ENCODE measurements at regions of chr11 and their contacts with region 1.

Region 1: DNA sequence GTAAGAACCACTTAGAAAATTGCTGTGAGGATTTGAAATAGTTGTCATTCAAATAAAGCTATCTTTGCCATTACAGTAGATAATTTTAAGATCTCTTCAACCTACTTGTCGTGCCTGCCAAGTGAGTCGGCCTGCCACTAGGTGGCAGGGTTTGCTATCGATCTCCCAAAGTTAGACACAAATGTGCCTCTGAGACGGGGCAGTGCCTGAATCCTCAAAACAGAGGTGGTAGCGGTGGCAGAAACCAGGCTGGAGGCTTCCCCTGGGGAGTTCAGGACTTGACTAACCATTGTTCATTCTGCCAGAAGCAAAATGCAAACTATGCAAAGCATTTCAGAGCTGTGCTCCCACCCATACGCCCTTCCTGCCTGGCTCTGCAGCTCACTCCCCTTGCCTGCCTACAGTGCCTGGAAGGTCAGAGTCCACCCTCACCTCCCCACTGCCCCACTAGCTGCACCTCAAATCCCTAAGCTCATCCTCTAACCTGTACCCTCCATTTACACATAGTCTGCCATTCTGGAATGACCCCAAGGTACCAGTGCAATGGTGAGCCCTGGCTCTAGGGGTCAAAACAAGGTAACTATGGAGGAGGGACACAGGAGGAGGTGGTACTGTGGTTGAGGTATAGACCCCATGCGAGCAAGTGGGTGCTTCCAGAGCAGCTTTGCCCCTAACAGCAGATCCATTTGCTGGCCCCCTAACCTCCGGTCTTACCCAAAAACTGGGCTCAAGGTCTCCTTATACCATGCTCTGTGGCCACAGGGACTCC is 82.1 kb downstream of the C11orf58 start:
- DNase-seq: peak; percentile 69 to 82 (median 70)
- ATAC-seq: peak; percentile 92
- H3K4me3 ChIP-seq: no peak overlapping the region
- H3K27ac ChIP-seq: no peak overlapping the region
- H3K4me1 ChIP-seq: peaks cover 0 to 5% of the 10 kb centered on the region in 2 experiments; a peak in 1 of 5 replicates
- H3K27me3 ChIP-seq: peaks cover 26 to 34% of the 10 kb centered on the region in 2 experiments
- CTCF ChIP-seq: peak; percentile 80 to 91 (median 87)
- EP300 ChIP-seq: no peak
- POLR2A ChIP-seq: no peak
- RAD21 ChIP-seq: peak; percentile 70 to 88

Region 2: GRCh38 chr11:15865212-15865987 is 955.1 kb before region 1 on chr11:
- CTCF ChIA-PET with region 1: no interaction called
- POLR2A ChIA-PET with region 1: no interaction called
- in situ Hi-C with region 1: no loop called
- intact Hi-C with region 1: no loop called
- DNase-seq: no peak
- ATAC-seq: no peak
- H3K4me3 ChIP-seq: no peak overlapping the region
- H3K27ac ChIP-seq: no peak overlapping the region
- H3K4me1 ChIP-seq: no peaks in the 10 kb centered on the region
- H3K27me3 ChIP-seq: peaks cover 2 to 10% of the 10 kb centered on the region in 2 experiments; a peak in 3 of 5 replicates
- CTCF ChIP-seq: no peak
- EP300 ChIP-seq: no peak
- POLR2A ChIP-seq: no peak
- RAD21 ChIP-seq: no peak

Region 3: DNA sequence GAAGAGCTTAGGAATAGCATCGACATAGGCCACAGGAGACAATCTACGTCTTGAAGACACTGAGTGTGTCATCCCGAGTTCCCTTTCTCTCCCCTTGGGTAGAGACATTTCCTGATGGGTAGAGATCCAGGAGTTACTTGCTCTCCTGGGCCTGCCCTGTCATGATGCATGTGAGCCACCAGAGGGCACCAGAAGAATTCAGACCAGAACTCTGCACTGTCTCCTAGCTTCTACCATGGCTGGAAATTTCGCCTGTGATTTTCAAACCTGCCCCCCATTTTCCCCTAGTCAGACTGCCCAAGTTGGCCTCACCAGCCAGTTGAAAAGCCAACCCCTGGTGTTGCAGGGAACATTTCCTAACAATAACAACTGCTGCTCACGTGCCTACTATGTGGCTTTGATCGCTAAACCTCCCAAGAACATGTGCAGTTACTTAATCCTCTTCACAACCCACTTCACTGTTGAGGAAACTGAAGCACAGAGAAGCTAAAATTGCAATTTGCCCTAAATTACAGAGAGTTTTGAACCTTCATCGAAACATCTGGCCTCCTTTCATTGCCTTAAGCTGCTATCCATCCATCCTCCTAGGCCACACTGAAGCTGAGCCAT is 34.9 kb before region 1 on chr11:
- CTCF ChIA-PET with region 1: no interaction called
- POLR2A ChIA-PET with region 1: no interaction called
- in situ Hi-C with region 1: no loop called
- intact Hi-C with region 1: loop called (anchors 5 kb)
- DNase-seq: peak; percentile 75 to 78 (median 76)
- ATAC-seq: peak; percentile 85
- H3K4me3 ChIP-seq: no peak overlapping the region
- H3K27ac ChIP-seq: no peak overlapping the region
- H3K4me1 ChIP-seq: peaks cover 0 to 6% of the 10 kb centered on the region in 2 experiments; a peak in 1 of 5 replicates
- H3K27me3 ChIP-seq: peaks cover 8 to 30% of the 10 kb centered on the region in 2 experiments; a peak in 4 of 5 replicates
- CTCF ChIP-seq: peak; percentile 83 to 87 (median 85)
- EP300 ChIP-seq: no peak
- POLR2A ChIP-seq: no peak
- RAD21 ChIP-seq: peak; percentile 65 to 80

Region 4: DNA sequence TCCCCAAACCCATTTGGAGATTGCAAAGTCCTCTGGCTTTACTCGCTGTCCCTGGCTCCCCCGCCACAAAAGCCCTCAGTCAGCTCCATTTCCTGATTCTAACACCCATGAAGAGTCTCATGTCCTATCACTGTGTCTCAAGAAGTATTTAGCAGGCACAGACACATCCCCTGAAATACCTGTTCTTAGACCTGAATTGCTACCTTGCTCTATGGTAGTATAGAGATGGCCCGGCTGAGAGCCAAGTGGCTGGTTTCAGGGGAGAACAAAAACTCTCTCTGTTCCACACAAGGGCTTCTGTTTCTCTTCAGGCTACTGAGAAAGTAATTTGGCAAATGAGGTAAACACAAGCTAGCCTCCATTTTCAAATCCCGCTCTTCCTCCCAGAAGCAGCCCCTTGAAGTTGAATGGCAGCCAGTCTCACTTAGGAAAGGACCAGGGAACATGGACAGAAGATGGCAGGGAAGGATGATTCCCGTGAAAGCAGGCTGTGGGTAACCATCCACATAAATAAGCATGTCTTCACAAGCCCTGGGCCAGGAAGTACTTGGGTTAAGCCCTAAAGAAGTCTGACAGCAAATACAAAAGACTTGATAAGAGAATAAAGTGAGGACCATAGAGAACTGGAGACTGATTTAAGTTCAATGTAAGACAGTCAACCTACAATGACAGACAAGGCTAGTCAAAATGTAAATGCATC is 55.7 kb after region 1 on chr11:
- CTCF ChIA-PET with region 1: interaction called, 4 read pairs
- POLR2A ChIA-PET with region 1: no interaction called
- in situ Hi-C with region 1: loop called (anchors 5 kb)
- intact Hi-C with region 1: no loop called
- DNase-seq: no peak
- ATAC-seq: no peak
- H3K4me3 ChIP-seq: no peak overlapping the region
- H3K27ac ChIP-seq: no peak overlapping the region
- H3K4me1 ChIP-seq: no peaks in the 10 kb centered on the region
- H3K27me3 ChIP-seq: peaks cover 26 to 50% of the 10 kb centered on the region in 2 experiments
- CTCF ChIP-seq: no peak
- EP300 ChIP-seq: no peak
- POLR2A ChIP-seq: no peak
- RAD21 ChIP-seq: no peak

Region 5: GRCh38 chr11:16883174-16883573 is 62.7 kb after region 1 on chr11:
- CTCF ChIA-PET with region 1: interaction called, 4 read pairs
- POLR2A ChIA-PET with region 1: interaction called, 3 read pairs
- in situ Hi-C with region 1: loop called (anchors 5 kb)
- intact Hi-C with region 1: loop called (anchors 1 kb)
- DNase-seq: peak; percentile 24 to 75 (median 46)
- ATAC-seq: peak; percentile 91
- H3K4me3 ChIP-seq: no peak overlapping the region
- H3K27ac ChIP-seq: no peak overlapping the region
- H3K4me1 ChIP-seq: peaks cover 0 to 6% of the 10 kb centered on the region in 2 experiments; a peak in 2 of 5 replicates
- H3K27me3 ChIP-seq: peaks cover 14 to 28% of the 10 kb centered on the region in 2 experiments
- CTCF ChIP-seq: peak; percentile 59 to 73 (median 60)
- EP300 ChIP-seq: no peak
- POLR2A ChIP-seq: no peak
- RAD21 ChIP-seq: peak in 1 of 2 experiments; percentile 83; a peak in 3 of 4 replicates

Region 6: DNA sequence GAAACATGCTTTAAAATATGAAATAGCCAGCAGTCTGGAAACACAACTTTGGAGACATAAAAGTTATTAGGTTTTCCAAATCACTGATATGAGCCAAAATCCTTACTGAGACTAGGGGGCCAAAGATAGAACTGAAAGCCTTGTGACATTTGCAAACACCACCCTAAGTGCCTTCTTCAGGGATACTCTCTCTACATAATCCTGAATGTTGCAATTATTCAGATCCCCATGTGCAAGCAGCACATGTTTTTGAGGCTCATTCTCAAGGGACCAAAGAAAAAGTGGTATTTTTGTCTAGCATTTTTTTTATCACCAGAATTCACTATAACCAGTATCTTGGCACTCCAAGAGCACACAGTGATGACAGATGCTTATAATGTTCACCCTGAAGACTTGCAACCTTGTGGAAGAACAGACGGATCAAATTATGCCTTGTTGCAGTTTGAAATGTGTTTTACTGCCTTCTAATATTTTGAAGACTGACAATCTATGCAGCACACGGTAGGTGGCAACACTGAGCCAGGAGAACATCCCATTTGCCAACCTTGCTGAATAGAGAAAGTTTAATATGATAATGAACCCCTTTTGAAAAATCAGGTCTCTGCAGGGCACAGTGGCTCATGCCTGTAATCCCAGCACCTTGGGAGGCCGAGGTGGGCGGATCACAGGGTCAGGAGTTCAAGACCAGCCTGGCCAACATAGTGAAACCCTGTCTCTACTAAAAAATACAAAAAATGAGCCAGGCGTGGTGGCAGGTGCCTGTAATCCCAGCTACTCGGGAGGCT is 115.2 kb after region 1 on chr11:
- CTCF ChIA-PET with region 1: interaction called, 4 read pairs
- POLR2A ChIA-PET with region 1: no interaction called
- in situ Hi-C with region 1: no loop called
- intact Hi-C with region 1: loop called (anchors 2 kb)
- DNase-seq: peak in 2 of 4 experiments; percentile 33 to 45
- ATAC-seq: peak; percentile 72; the same call in 2 of the 3 replicates
- H3K4me3 ChIP-seq: no peak overlapping the region
- H3K27ac ChIP-seq: no peak overlapping the region
- H3K4me1 ChIP-seq: no peaks in the 10 kb centered on the region
- H3K27me3 ChIP-seq: peaks cover 9 to 25% of the 10 kb centered on the region in 2 experiments; a peak in 3 of 5 replicates
- CTCF ChIP-seq: peak; percentile 65 to 74 (median 71); a peak in 5 of 6 replicates
- EP300 ChIP-seq: no peak
- POLR2A ChIP-seq: no peak
- RAD21 ChIP-seq: peak; percentile 42 to 62; a peak in 3 of 4 replicates

Measured in K562 (cell line).